K562 (cell line): ENCODE measurements at regions of chr12 and their contacts with region 1.

Region 1: GRCh38 chr12:8544295-8544694 is 3.6 kb upstream of the CLEC4E start:
- DNase-seq: peak; percentile 44 to 62 (median 48)
- ATAC-seq: peak; percentile 75
- H3K4me3 ChIP-seq: no peak overlapping the region
- H3K27ac ChIP-seq: no peak overlapping the region
- H3K4me1 ChIP-seq: no peaks in the 10 kb centered on the region; a peak in 1 of 5 replicates
- H3K27me3 ChIP-seq: no peaks in the 10 kb centered on the region
- CTCF ChIP-seq: peak; percentile 67 to 79 (median 71)
- EP300 ChIP-seq: no peak
- POLR2A ChIP-seq: no peak
- RAD21 ChIP-seq: peak; percentile 35 to 59

Region 2: DNA sequence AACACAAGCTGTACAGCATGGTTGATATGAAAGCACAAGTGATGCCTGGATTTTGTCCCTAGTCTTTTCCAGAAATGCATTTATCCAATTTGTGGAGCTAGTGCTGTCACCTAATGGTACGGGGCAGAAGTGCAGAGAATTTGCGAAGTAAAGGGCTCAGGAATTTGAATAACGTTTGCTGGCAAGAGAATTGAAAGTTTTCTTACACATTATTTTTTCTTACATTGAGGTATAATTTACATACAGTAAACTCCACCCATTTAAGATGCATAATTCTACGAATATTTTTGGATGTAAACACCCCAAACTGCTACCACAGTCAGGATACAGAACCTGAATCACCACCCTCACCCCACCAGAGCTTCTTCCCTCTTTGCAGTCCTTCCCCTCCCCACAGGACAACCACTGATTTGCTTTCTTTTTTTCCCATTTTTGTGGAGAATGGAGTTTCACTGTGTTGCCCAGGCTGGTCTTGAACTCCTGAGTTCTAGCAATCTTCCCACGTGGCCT is 64.8 kb after region 1 on chr12:
- CTCF ChIA-PET with region 1: no interaction called
- POLR2A ChIA-PET with region 1: interaction called, 3 read pairs
- in situ Hi-C with region 1: no loop called
- intact Hi-C with region 1: loop called (anchors 5 kb)
- DNase-seq: peak in 2 of 4 experiments; percentile 13 to 32
- ATAC-seq: peak; percentile 68; the same call in 2 of the 3 replicates
- H3K4me3 ChIP-seq: no peak overlapping the region
- H3K27ac ChIP-seq: no peak overlapping the region
- H3K4me1 ChIP-seq: peaks cover 4 to 5% of the 10 kb centered on the region in 2 experiments; a peak in 4 of 5 replicates
- H3K27me3 ChIP-seq: peaks cover 8 to 9% of the 10 kb centered on the region in 2 experiments
- CTCF ChIP-seq: peak; percentile 48 to 71 (median 63)
- EP300 ChIP-seq: no peak
- POLR2A ChIP-seq: no peak
- RAD21 ChIP-seq: peak in 1 of 2 experiments; percentile 43; a peak in 2 of 4 replicates

Region 3: DNA sequence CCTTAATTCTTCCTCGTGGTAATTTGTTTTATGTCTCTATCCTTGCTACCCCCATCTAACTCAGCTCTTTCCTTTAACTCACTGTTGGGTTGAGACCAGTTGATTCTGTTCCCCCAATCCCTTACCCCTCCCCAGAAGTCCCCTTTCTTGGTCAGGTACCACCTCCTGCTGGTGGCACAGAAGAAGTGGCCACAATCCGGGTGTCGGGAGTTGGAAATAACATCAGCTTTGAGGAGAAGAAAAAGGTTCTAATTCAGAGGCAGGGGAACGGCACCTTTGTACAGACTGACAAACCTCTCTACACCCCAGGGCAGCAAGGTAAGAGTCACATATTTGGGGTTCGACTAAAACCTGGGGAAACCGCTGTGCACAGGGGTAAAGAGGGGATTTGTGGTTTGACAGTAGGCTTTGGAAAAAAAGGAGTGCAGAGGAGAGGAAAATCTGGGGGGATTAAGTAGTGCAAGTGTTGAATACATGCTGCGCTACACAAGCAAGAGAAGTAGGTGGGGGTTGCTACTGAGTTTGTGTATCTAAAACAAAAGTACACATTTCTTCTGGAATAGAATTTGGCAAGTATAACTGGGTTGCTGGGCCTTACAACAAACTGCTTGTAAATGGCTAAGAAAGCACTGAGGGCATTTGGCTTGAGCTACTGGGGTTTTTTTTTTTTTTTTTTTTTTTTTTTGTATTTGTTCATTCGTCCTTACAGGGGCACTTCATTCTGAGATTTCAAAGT is 279.4 kb after region 1 on chr12:
- CTCF ChIA-PET with region 1: no interaction called
- POLR2A ChIA-PET with region 1: no interaction called
- in situ Hi-C with region 1: no loop called
- intact Hi-C with region 1: loop called (anchors 2 kb)
- DNase-seq: peak; percentile 24 to 68 (median 48)
- ATAC-seq: peak; percentile 88
- H3K4me3 ChIP-seq: no peak overlapping the region
- H3K27ac ChIP-seq: no peak overlapping the region
- H3K4me1 ChIP-seq: peaks cover 10 to 15% of the 10 kb centered on the region in 2 experiments; a peak in 4 of 5 replicates
- H3K27me3 ChIP-seq: no peaks in the 10 kb centered on the region
- CTCF ChIP-seq: peak; percentile 79 to 81 (median 79)
- EP300 ChIP-seq: no peak
- POLR2A ChIP-seq: no peak
- RAD21 ChIP-seq: peak; percentile 66 to 87

Region 4: DNA sequence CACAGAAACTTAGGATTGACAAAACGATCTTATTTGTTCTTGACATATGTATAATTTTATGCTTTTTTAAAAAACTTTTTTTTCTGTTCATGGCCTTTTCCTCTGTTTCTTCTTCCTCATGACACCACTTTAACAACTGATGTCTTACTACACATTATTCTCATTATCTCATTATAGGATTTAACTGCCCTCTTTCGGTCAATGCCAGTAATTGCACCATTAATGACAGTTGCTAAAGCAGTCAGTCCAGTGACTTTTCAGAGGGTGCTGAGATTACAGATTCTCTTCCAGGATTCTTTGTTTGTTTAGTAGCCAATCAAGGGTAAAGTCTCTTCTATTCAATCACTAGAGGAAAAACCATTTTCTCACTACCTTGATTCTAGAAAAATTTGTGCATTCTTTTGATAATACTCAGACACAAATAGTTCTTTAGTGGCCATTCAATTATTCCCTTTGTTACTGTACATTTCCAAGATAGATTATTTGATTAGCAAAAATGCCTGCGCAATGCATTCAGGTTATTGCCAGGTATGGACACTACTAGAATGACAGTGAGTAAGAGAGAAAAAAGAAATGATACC is 495.2 kb after region 1 on chr12:
- CTCF ChIA-PET with region 1: interaction called, 14 read pairs
- POLR2A ChIA-PET with region 1: no interaction called
- in situ Hi-C with region 1: no loop called
- intact Hi-C with region 1: no loop called
- DNase-seq: peak; percentile 39 to 53 (median 42)
- ATAC-seq: peak; percentile 50; the same call in 2 of the 3 replicates
- H3K4me3 ChIP-seq: no peak overlapping the region
- H3K27ac ChIP-seq: no peak overlapping the region
- H3K4me1 ChIP-seq: no peaks in the 10 kb centered on the region
- H3K27me3 ChIP-seq: no peaks in the 10 kb centered on the region
- CTCF ChIP-seq: peak; percentile 44 to 74 (median 48); a peak in 4 of 6 replicates
- EP300 ChIP-seq: no peak
- POLR2A ChIP-seq: no peak
- RAD21 ChIP-seq: peak; percentile 73 to 79

Region 5: DNA sequence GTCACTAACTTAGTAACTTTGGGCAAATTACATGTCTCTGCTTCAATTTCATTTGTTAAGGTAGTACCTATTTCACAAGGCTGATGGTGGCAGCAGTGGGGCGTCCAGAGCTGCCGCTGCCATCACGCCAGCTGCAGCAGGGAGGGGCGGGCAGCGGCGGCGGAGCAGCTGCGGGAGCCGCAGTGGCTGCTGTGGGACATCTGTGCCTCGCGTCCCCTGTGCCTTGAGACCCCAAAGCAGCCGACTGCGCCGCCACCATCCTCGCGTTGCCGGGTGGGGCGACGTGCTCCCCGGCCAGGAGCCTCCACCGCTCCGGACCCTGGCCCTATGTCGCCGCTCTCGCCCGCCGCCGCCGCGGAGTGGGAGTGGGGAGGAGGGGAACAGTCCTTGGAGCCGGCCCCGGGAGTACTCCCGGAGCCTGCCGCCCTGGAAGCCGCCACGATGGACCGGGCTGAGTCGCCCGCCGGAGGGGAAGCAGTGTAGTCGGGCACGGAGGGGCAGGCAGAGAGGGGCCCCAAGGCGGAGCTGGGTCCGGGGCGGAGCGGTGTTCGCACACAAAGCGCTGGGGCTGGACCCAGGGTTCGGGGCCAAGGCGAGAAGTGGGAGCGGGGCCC is 520.0 kb after region 1 on chr12:
- CTCF ChIA-PET with region 1: no interaction called
- POLR2A ChIA-PET with region 1: no interaction called
- in situ Hi-C with region 1: no loop called
- intact Hi-C with region 1: loop called (anchors 5 kb)
- DNase-seq: no peak
- ATAC-seq: no peak; the same call in 2 of the 3 replicates
- H3K4me3 ChIP-seq: no peak overlapping the region
- H3K27ac ChIP-seq: no peak overlapping the region
- H3K4me1 ChIP-seq: peaks cover 0 to 9% of the 10 kb centered on the region in 2 experiments; a peak in 2 of 5 replicates
- H3K27me3 ChIP-seq: peaks cover 0 to 23% of the 10 kb centered on the region in 2 experiments; a peak in 4 of 5 replicates
- CTCF ChIP-seq: peak in 1 of 3 experiments; percentile 10; a peak in 1 of 6 replicates
- EP300 ChIP-seq: no peak
- POLR2A ChIP-seq: no peak
- RAD21 ChIP-seq: no peak; a peak in 1 of 4 replicates